ENCODE measurements at regions of chr22 and their contacts with region 1.

Region 1: DNA sequence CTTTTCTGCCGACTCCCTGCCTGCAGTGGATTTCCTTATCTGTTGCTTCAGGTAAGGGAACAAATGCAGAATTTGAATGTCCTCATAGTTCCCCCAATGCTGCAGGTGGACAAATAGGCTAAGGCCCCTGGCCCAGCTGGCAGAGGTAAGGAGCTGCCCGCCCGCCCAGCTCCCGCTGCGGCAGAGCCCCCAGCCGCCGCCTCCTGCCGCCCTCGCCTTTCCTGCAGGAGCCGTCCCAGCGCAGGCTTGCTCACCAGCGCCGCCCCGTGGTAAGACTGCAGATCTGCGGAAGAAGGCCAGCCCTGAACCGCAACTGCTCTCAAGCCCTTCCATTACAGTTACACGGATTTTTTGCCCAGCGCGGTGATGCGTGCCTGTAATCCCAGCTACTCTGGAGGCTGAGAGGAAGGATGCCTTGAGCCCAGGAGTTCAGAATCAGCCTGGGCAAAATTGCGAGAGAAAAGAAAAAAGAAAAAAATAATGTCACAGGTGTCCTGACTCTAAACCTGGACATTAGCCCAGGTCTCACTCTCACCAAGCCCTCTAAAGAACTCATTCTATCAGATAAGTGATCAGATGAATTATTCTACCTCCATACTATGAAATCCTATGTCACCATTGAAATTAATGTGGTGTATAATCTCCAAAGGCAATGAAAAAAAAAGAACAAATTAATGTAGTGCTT is 51.2 kb upstream of the EMID1 start:
- DNase-seq: peak; percentile 63 to 82
- H3K4me3 ChIP-seq: no peak overlapping the region
- H3K4me3 Mint-ChIP-seq: peak overlapping the region; percentile 41
- H3K27ac Mint-ChIP-seq: no peak overlapping the region
- H3K4me1 ChIP-seq: no peaks in the 10 kb centered on the region
- H3K4me1 Mint-ChIP-seq: peaks cover 10% of the 10 kb centered on the region
- H3K27me3 ChIP-seq: no peaks in the 10 kb centered on the region
- H3K27me3 Mint-ChIP-seq: no peaks in the 10 kb centered on the region
- CTCF ChIP-seq: peak; percentile 93 to 96

Region 2: DNA sequence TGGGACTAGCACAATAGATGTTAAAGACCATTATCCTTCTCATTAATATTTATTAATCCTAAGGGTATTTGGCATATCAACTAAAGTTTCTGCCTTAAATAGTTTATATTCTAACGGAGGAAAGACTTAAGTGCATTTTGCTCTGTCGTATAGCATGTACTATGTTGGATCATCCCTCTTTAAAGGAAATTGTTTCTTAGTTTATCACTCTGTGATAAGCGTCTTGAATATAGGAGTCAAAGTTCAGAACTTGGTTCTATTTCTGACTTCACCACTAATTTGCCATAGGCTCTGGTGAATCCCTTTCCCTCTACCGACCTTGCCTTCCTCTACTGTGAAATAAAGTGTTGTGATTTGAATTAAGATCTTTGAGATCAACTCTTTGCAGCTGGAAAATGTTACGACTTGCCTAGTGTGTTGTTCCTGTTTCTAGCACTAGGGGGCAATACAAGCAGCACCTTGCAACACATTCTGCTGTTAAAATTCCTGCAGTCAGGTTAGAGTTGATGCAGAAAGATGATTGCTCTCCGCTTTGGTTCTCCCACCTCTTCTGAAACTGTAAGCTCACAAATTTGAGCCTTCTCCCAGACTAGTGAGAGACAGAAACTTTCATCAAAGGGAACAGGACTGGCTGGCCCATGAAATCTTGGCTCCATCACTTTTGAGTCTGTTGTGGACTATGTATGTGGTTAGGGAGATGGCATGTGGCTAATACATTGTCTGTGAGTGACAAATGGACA is 299.0 kb before region 1 on chr22:
- CTCF ChIA-PET with region 1: interaction called, 7 read pairs
- POLR2A ChIA-PET with region 1: no interaction called
- intact Hi-C with region 1: loop called (anchors 10 kb)
- DNase-seq: peak; percentile 52 to 73
- H3K4me3 ChIP-seq: no peak overlapping the region
- H3K4me3 Mint-ChIP-seq: no peak overlapping the region
- H3K27ac Mint-ChIP-seq: no peak overlapping the region
- H3K4me1 ChIP-seq: peaks cover 10% of the 10 kb centered on the region
- H3K4me1 Mint-ChIP-seq: peaks cover 10% of the 10 kb centered on the region
- H3K27me3 ChIP-seq: no peaks in the 10 kb centered on the region
- H3K27me3 Mint-ChIP-seq: no peaks in the 10 kb centered on the region
- CTCF ChIP-seq: peak; percentile 89 to 91

Region 3: GRCh38 chr22:29004647-29005371 is 149.7 kb before region 1 on chr22:
- CTCF ChIA-PET with region 1: no interaction called
- POLR2A ChIA-PET with region 1: no interaction called
- intact Hi-C with region 1: no loop called
- DNase-seq: peak; percentile 67 to 76
- H3K4me3 ChIP-seq: no peak overlapping the region
- H3K4me3 Mint-ChIP-seq: peak overlapping the region; percentile 54
- H3K27ac Mint-ChIP-seq: peak overlapping the region; percentile 87
- H3K4me1 ChIP-seq: peaks cover 70% of the 10 kb centered on the region
- H3K4me1 Mint-ChIP-seq: peaks cover 45% of the 10 kb centered on the region
- H3K27me3 ChIP-seq: no peaks in the 10 kb centered on the region
- H3K27me3 Mint-ChIP-seq: no peaks in the 10 kb centered on the region
- CTCF ChIP-seq: no peak

Region 4: GRCh38 chr22:29072193-29072978 is 82.1 kb before region 1 on chr22:
- CTCF ChIA-PET with region 1: interaction called, 6 read pairs
- POLR2A ChIA-PET with region 1: no interaction called
- intact Hi-C with region 1: loop called (anchors 1 kb)
- DNase-seq: peak; percentile 98 to 99
- H3K4me3 ChIP-seq: peak overlapping the region; percentile 49
- H3K4me3 Mint-ChIP-seq: peak overlapping the region; percentile 73
- H3K27ac Mint-ChIP-seq: peak overlapping the region; percentile 84
- H3K4me1 ChIP-seq: peaks cover 46% of the 10 kb centered on the region
- H3K4me1 Mint-ChIP-seq: peaks cover 40% of the 10 kb centered on the region
- H3K27me3 ChIP-seq: no peaks in the 10 kb centered on the region
- H3K27me3 Mint-ChIP-seq: no peaks in the 10 kb centered on the region
- CTCF ChIP-seq: no peak

Region 5: GRCh38 chr22:29112102-29112501 is 42.4 kb before region 1 on chr22:
- CTCF ChIA-PET with region 1: interaction called, 5 read pairs
- POLR2A ChIA-PET with region 1: interaction called, 6 read pairs
- intact Hi-C with region 1: loop called (anchors 5 kb)
- DNase-seq: peak in 1 of 2 experiments; percentile 18
- H3K4me3 ChIP-seq: no peak overlapping the region
- H3K4me3 Mint-ChIP-seq: no peak overlapping the region
- H3K27ac Mint-ChIP-seq: no peak overlapping the region
- H3K4me1 ChIP-seq: peaks cover 38% of the 10 kb centered on the region
- H3K4me1 Mint-ChIP-seq: peaks cover 28% of the 10 kb centered on the region
- H3K27me3 ChIP-seq: no peaks in the 10 kb centered on the region
- H3K27me3 Mint-ChIP-seq: no peaks in the 10 kb centered on the region
- CTCF ChIP-seq: no peak

Region 6: DNA sequence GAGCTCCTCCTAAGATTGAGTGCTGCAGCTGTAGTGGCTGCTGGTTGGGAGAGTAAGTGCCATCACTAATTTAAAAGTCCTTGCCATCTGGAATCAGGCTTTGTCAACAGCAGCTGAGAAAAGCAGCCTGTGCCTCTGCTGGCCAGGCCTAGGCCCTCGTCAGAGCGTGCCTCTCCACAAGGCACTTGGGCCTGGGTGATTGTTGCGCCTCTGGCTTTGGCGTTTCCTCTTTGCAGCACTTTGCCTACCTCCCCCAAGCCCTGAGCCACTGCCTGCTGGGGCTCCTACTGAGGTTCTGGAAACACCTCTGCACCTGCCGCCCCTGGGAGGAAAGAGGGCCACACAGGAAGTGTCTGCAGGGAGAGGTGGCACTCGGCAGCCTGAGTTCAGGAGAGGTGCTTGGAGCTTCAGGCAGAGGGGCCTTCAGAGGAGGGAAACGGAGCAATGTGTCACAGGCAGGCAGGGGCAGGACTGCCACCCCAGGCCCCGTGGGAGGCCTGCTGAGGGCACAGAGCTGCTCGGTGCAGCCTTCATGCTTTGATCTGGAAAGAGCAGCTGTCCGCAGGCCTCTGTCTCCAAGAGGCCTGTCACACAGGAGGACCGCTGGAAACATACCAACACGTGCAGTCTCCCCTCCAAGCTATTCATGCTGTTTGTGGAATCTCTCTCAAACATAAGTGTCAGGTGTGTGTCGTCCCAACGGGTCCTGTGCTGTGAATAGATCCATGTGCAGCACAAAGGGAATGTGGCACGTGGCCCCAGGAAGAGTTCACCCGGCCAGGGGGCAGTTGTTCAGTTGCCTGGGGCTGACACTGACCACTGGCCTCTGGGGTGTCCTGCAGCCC is 10.3 kb before region 1 on chr22:
- CTCF ChIA-PET with region 1: interaction called, 5 read pairs
- POLR2A ChIA-PET with region 1: no interaction called
- intact Hi-C with region 1: loop called (anchors 2 kb)
- DNase-seq: peak in 1 of 2 experiments; percentile 22
- H3K4me3 ChIP-seq: no peak overlapping the region
- H3K4me3 Mint-ChIP-seq: no peak overlapping the region
- H3K27ac Mint-ChIP-seq: no peak overlapping the region
- H3K4me1 ChIP-seq: peaks cover 8% of the 10 kb centered on the region
- H3K4me1 Mint-ChIP-seq: peaks cover 2% of the 10 kb centered on the region
- H3K27me3 ChIP-seq: no peaks in the 10 kb centered on the region
- H3K27me3 Mint-ChIP-seq: no peaks in the 10 kb centered on the region
- CTCF ChIP-seq: no peak

Region 7: GRCh38 chr22:29172216-29172615 is 17.7 kb after region 1 on chr22:
- CTCF ChIA-PET with region 1: no interaction called
- POLR2A ChIA-PET with region 1: no interaction called
- intact Hi-C with region 1: no loop called
- DNase-seq: no peak
- H3K4me3 ChIP-seq: no peak overlapping the region
- H3K4me3 Mint-ChIP-seq: no peak overlapping the region
- H3K27ac Mint-ChIP-seq: no peak overlapping the region
- H3K4me1 ChIP-seq: no peaks in the 10 kb centered on the region
- H3K4me1 Mint-ChIP-seq: no peaks in the 10 kb centered on the region
- H3K27me3 ChIP-seq: no peaks in the 10 kb centered on the region
- H3K27me3 Mint-ChIP-seq: no peaks in the 10 kb centered on the region
- CTCF ChIP-seq: no peak